OCI-LY7 (cell line): ENCODE measurements at regions of chr14 and their contacts with region 1.

Region 1: DNA sequence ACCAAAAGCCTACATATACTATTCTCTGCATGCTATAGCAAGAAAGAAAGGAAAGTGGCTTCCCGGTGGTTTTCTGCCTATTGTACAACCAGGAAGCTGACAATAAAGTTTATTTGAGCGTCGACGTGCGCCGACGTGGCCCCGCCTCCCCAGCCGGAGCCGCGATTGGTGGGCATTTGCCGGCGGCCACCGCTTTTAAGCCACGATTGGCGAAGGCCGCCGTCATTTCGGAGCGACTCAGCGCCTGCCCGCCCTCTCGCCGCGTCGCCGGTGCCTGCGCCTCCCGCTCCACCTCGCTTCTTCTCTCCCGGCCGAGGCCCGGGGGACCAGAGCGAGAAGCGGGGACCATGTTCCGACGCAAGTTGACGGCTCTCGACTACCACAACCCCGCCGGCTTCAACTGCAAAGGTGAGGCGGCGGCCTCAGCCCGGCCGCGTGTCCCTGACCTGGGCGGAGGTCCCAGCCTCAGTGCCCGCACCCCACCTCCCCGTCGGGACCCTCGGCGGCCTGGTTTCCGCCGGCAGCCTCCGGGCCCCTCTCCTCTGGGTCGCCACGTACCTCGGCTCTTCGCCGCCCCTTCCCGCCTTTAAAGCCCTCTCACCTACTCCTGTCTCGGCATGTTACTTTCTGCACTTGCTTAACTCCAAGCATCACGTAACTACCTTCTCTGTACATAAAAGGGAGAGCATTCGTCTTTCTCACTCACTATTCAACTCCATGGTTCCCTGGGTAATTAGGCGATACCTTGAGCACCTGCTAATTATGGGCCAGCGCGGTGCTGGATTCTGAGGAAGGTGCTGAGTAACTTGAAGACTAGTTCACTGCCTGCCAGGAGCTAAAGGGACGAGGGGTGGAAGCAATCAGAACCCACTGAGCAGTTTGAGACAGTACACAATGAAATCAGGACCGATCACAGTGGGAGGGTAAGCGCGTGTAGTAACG is at the start of gene RTRAF:
- DNase-seq: peak; percentile 93
- H3K4me3 ChIP-seq: peak within 1 kb of the TSS; percentile 97
- H3K27ac ChIP-seq: peak within 1 kb of the TSS; percentile 44
- H3K4me1 ChIP-seq: peaks cover 30% of the 10 kb centered on the region
- CTCF ChIP-seq: no peak
- total RNA-seq, gene RTRAF: 194 and 244 TPM in 2 replicates

Region 2: DNA sequence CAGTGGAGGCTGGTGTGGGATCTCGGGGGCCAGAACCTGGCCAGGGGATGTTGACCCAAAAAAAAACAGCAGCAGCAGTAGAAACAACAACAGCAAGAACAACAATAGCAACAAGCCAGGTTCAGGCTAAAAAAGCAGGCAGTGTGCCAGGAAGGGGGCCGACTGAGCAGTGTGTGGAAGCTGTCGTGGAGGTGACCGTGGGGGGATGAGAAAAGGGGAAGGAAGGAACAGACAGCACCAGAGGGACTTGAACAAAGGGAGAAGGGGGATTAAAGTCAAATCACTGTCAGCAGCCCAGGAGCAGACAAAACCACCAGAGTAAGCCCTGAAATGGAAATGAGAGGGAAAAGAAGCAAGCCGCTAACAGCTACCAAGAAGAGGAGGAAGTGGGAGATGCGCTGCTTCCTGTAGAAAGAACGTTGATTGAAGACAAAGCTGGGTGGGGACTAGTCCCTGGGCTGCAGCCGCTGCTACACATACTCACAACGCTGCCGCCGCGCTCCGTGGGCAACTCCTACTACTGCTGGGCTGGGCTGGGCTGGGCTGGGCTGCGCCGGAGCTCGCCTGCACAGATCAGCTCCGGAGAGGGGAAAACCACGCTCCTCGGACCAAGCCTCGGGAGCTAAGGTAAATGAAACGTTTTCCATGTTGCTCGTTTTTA is 129.3 kb before region 1 on chr14 and contains the start of gene GNG2:
- CTCF ChIA-PET with region 1: no interaction called
- POLR2A ChIA-PET with region 1: no interaction called
- intact Hi-C with region 1: loop called (anchors 5 kb)
- DNase-seq: peak; percentile 89
- H3K4me3 ChIP-seq: peak within 1 kb of the TSS; percentile 70
- H3K27ac ChIP-seq: peak within 1 kb of the TSS; percentile 59
- H3K4me1 ChIP-seq: peaks cover 28% of the 10 kb centered on the region
- CTCF ChIP-seq: no peak
- total RNA-seq, gene GNG2: 22.3 and 24.0 TPM in 2 replicates